ENCODE measurements at regions of chr3 and their contacts with region 1.

Region 1: GRCh38 chr3:46538803-46539442 is 27.2 kb downstream of the LRRC2 start:
- DNase-seq: peak; percentile 70
- ATAC-seq: peak; percentile 86
- H3K4me3 Mint-ChIP-seq: peak overlapping the region; percentile 65
- H3K27ac Mint-ChIP-seq: peak overlapping the region; percentile 90
- H3K4me1 Mint-ChIP-seq: peaks cover 71% of the 10 kb centered on the region
- H3K27me3 Mint-ChIP-seq: peaks cover 2% of the 10 kb centered on the region
- CTCF ChIP-seq: no peak

Region 2: DNA sequence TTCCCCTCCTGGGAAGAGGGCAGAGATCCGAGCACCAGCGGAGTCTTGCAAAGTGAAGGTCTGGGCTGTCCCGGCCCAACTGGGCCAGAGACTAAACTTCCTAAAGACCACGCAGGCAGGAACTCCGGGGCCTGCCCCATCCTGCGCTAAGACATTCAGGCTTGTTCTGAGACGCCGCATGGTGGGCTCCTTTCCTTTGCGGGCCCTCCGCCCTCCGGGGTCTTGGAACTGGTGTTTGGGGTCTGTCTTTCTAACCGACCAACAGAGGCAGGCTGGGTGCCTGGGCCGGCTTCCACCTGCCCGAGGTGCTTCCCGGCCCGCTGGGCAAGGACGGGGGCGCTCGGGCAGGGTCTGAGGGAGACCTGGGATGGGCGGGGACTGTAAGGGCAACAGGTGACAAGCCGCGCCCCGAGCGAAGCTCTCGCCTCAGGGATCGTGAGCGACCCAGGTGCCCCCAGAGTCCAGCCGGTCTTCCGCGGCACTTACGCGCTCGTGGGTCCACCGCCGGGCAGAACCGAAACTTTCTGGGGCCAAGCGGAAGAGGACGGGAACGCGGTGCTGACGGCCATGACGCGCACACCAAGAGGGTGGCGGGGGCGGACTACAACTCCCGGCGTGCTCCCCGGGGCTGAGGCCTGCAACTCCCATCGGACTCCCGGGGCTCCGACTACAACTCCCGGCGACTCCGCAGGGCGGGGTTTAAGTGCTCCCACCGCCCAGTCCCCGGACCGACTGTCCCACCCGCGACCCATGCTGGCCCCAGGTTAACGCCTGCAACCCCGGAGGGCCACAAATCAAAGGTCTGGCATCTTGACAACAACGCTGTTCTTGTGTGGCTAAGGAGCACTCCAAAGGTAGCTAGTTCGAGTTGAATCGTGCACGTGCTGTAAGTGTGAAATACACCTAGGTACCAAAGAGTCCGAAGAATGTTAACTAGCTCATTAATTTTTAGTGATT is 543.4 kb before region 1 on chr3 and contains the start of gene FYCO1:
- CTCF ChIA-PET with region 1: no interaction called
- POLR2A ChIA-PET with region 1: no interaction called
- intact Hi-C with region 1: loop called (anchors 10 kb)
- DNase-seq: peak; percentile 82
- ATAC-seq: peak; percentile 97
- H3K4me3 Mint-ChIP-seq: peak within 1 kb of the TSS; percentile 89
- H3K27ac Mint-ChIP-seq: peak within 1 kb of the TSS; percentile 89
- H3K4me1 Mint-ChIP-seq: peaks cover 41% of the 10 kb centered on the region
- H3K27me3 Mint-ChIP-seq: no peaks in the 10 kb centered on the region
- CTCF ChIP-seq: no peak
- total RNA-seq, gene FYCO1: 10.6 and 14.9 TPM in 2 replicates

Region 3: DNA sequence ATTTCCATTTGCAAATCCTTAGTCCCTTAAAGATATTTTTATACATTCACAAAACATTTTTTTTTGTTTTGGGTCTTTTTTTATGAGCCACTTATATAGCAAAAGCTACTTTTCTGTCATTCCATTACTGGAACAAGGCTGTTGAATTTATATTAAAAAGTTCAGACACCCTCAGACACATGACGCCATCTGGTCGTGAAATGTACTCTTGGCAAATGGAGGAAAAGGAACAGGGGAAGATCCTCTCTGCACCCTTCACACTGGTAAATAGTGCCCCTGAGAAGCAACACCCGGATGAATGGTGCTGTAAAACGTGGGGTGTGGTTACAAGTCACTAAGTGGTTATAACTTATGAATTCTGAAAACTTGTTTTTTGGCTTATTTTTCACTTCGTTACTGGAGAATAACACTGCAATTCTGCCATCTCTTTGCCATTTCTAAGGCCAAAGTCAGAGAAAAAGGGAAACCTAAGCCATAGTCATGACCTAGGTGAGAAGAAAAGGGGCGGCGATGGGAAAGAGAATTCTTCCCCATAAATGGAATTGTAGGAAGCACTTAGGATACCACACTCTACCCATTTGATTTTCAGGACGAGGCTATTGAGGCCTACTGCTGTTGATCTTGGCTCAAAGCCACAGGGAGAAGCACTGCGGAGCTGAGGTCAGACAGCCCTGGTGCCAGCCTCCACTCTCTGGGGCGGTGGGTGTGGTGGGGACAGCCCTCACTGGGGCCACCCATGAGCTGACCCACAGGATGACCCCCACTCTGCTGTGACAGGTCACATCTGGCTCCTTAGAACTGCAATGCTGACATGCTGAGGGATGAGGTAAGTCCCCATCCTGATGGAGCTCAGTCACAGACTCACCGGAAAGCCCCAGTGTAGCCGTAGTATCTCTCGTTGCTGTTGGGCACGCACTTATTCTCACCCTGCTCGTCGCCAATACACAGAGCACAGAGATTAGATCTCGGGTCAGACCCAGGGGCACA is 96.1 kb before region 1 on chr3:
- CTCF ChIA-PET with region 1: no interaction called
- POLR2A ChIA-PET with region 1: no interaction called
- intact Hi-C with region 1: loop called (anchors 2 kb)
- DNase-seq: no peak
- ATAC-seq: no peak
- H3K4me3 Mint-ChIP-seq: no peak overlapping the region
- H3K27ac Mint-ChIP-seq: no peak overlapping the region
- H3K4me1 Mint-ChIP-seq: peaks cover 39% of the 10 kb centered on the region
- H3K27me3 Mint-ChIP-seq: no peaks in the 10 kb centered on the region
- CTCF ChIP-seq: no peak

Region 4: GRCh38 chr3:46504789-46505188 is 34.1 kb before region 1 on chr3:
- CTCF ChIA-PET with region 1: interaction called, 5 read pairs
- POLR2A ChIA-PET with region 1: interaction called, 7 read pairs
- intact Hi-C with region 1: loop called (anchors 2 kb)
- DNase-seq: no peak
- ATAC-seq: peak; percentile 77
- H3K4me3 Mint-ChIP-seq: no peak overlapping the region
- H3K27ac Mint-ChIP-seq: peak overlapping the region; percentile 65
- H3K4me1 Mint-ChIP-seq: peaks cover 43% of the 10 kb centered on the region
- H3K27me3 Mint-ChIP-seq: no peaks in the 10 kb centered on the region
- CTCF ChIP-seq: no peak

Region 5: DNA sequence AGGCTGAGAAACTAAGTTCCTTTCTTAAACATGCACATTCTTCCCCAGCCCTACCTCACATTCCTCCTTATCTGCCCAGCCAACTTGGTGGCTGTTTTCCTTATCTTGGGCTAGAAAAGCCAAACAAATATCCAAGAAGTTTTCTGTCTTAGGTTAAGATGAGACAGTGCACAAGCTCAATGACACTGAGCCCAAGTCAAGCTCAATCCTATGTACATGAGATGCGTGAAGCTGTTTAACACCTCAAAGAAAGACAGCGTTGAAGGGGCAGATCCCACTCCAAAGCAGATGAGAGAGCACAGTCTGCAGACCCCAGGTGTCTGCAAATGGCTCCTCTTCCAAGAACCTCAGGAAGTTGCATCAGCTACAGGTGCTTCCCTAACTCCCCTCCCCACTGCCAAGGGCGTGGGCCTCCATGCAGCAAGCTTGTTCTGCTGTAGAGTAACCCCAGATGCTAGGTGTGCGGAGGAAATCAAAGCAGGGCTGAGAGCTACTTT is 10.5 kb after region 1 on chr3:
- CTCF ChIA-PET with region 1: interaction called, 3 read pairs
- POLR2A ChIA-PET with region 1: interaction called, 8 read pairs
- intact Hi-C with region 1: loop called (anchors 1 kb)
- DNase-seq: no peak
- ATAC-seq: no peak
- H3K4me3 Mint-ChIP-seq: no peak overlapping the region
- H3K27ac Mint-ChIP-seq: no peak overlapping the region
- H3K4me1 Mint-ChIP-seq: peaks cover 35% of the 10 kb centered on the region
- H3K27me3 Mint-ChIP-seq: peaks cover 3% of the 10 kb centered on the region
- CTCF ChIP-seq: no peak

Region 6: GRCh38 chr3:46976326-46977190 is 437.6 kb after region 1 on chr3 and contains the start of gene CCDC12:
- CTCF ChIA-PET with region 1: no interaction called
- POLR2A ChIA-PET with region 1: no interaction called
- intact Hi-C with region 1: loop called (anchors 10 kb)
- DNase-seq: peak; percentile 83
- ATAC-seq: peak; percentile 77
- H3K4me3 Mint-ChIP-seq: peak within 1 kb of the TSS; percentile 97
- H3K27ac Mint-ChIP-seq: peak within 1 kb of the TSS; percentile 97
- H3K4me1 Mint-ChIP-seq: peaks cover 76% of the 10 kb centered on the region
- H3K27me3 Mint-ChIP-seq: no peaks in the 10 kb centered on the region
- CTCF ChIP-seq: no peak
- total RNA-seq, gene CCDC12: 93.8 and 98.4 TPM in 2 replicates

Measured in activated B cell treated with CpG ODN at 0.5 μM for 24 hours (primary cell).